ENCODE measurements at regions of chr14 and their contacts with region 1.

Region 1: DNA sequence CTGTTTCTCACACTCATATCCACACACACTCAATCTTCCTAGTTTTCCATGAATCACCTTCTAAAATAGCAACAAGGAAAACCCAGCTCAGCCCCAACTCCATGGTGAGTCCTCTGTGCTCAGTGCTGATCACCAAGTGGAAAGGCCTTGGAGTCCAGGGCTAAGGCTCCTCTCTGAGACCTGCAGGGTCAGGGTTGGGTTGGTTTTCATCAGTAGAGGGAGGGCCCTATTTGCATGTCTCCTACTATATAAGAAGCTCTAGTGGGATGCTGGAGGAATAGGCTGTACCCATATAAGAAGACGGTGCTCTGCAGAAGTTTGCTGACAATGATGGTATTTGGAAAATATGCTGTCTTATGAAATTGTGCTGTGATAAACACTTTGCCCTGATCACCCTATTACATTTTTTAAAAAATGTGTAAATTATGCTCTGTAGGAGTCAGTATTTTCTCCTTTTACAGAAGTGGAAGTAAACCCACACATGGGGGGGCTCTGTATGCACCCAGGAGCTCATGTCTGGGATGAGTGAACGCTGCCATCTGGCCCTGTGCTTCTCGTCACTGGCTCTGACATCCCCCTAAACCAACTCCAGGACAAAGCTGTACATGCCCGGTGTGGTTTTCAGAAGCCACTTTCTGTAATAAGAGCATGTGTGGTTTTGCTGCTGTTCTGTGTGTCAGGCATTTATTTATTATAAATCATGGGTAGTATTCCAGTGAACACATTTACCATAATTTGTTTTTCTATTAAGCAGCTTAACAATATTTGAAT is 536.3 kb downstream of the TMEM121 start:
- DNase-seq: no peak
- ATAC-seq: no peak
- H3K4me3 ChIP-seq: no peak overlapping the region
- H3K4me3 Mint-ChIP-seq: peak overlapping the region in 3 of 10 donors; percentile 21 to 69 (median 52)
- H3K27ac ChIP-seq: no peak overlapping the region
- H3K27ac Mint-ChIP-seq: peak overlapping the region in 3 of 9 donors; percentile 23 to 63 (median 26)
- H3K4me1 ChIP-seq: peaks cover 0 to 10% of the 10 kb centered on the region in 2 donors
- H3K4me1 Mint-ChIP-seq: peaks cover 0 to 25% (median 17%) of the 10 kb centered on the region in 7 donors
- H3K27me3 ChIP-seq: no peaks in the 10 kb centered on the region
- H3K27me3 Mint-ChIP-seq: peaks cover 9 to 45% (median 11%) of the 10 kb centered on the region in 5 donors

Region 2: GRCh38 chr14:105682940-105683570 is 379.6 kb before region 1 on chr14:
- CTCF ChIA-PET with region 1: no interaction called
- POLR2A ChIA-PET with region 1: no interaction called
- intact Hi-C with region 1: loop called in 1 of 2 experiments (anchors 5 kb)
- DNase-seq: no peak
- ATAC-seq: no peak
- H3K4me3 ChIP-seq: no peak overlapping the region
- H3K4me3 Mint-ChIP-seq: peak overlapping the region in 1 of 10 donors; percentile 34
- H3K27ac ChIP-seq: no peak overlapping the region
- H3K27ac Mint-ChIP-seq: peak overlapping the region in 3 of 9 donors; percentile 22 to 79 (median 63)
- H3K4me1 ChIP-seq: no peaks in the 10 kb centered on the region
- H3K4me1 Mint-ChIP-seq: peaks cover 0 to 7% (median 0%) of the 10 kb centered on the region in 7 donors
- H3K27me3 ChIP-seq: no peaks in the 10 kb centered on the region
- H3K27me3 Mint-ChIP-seq: peaks cover 0 to 3% (median 0%) of the 10 kb centered on the region in 5 donors

Region 3: GRCh38 chr14:105974902-105975301 is 87.8 kb before region 1 on chr14:
- CTCF ChIA-PET with region 1: interaction called, 4 read pairs
- POLR2A ChIA-PET with region 1: no interaction called
- intact Hi-C with region 1: loop called in 1 of 2 experiments (anchors 5 kb)
- DNase-seq: peak in 8 of 9 donors; percentile 31 to 59 (median 46)
- ATAC-seq: peak; percentile 73
- H3K4me3 ChIP-seq: no peak overlapping the region
- H3K4me3 Mint-ChIP-seq: peak overlapping the region in 1 of 10 donors; percentile 21
- H3K27ac ChIP-seq: no peak overlapping the region
- H3K27ac Mint-ChIP-seq: peak overlapping the region in 4 of 9 donors; percentile 12 to 76 (median 44)
- H3K4me1 ChIP-seq: peaks cover 10 to 11% of the 10 kb centered on the region in 2 donors
- H3K4me1 Mint-ChIP-seq: peaks cover 0 to 11% (median 8%) of the 10 kb centered on the region in 7 donors
- H3K27me3 ChIP-seq: peaks cover 0 to 10% of the 10 kb centered on the region in 2 donors
- H3K27me3 Mint-ChIP-seq: peaks cover 0 to 8% (median 0%) of the 10 kb centered on the region in 5 donors

Region 4: DNA sequence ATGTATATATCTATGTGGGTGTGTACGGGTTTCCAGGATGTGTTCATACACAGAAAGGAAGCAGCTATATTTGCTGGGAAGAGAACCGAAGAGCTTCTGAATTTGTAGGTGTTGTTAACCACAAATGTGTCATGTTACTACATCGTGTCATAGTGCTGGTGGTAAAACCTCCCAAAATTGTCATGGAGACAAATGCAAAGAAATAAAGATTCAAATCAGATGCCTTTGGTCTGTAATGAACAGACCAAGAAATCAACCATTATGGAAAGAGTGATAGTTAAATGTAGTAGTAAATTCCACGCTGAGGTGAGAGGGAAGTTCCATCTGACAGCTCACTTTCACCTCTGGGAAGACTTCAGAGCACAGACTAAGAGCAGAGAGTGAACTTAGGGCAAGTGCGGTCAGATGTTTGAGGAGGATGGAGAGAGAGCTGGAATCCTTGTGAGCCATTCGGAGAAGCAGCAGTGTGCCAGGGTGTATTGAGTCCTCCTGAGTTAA is 48.8 kb before region 1 on chr14:
- CTCF ChIA-PET with region 1: interaction called, 4 read pairs
- POLR2A ChIA-PET with region 1: no interaction called
- intact Hi-C with region 1: loop called in 1 of 2 experiments (anchors 1 kb)
- DNase-seq: peak in 4 of 9 donors; percentile 40 to 60 (median 54)
- ATAC-seq: peak; percentile 88
- H3K4me3 ChIP-seq: no peak overlapping the region
- H3K4me3 Mint-ChIP-seq: peak overlapping the region in 3 of 10 donors; percentile 16 to 65 (median 20)
- H3K27ac ChIP-seq: peak overlapping the region; percentile 48
- H3K27ac Mint-ChIP-seq: peak overlapping the region; percentile 64 to 93 (median 84)
- H3K4me1 ChIP-seq: peaks cover 0 to 7% of the 10 kb centered on the region in 2 donors
- H3K4me1 Mint-ChIP-seq: peaks cover 14 to 53% (median 20%) of the 10 kb centered on the region in 7 donors
- H3K27me3 ChIP-seq: no peaks in the 10 kb centered on the region
- H3K27me3 Mint-ChIP-seq: peaks cover 0 to 2% (median 0%) of the 10 kb centered on the region in 5 donors

Region 5: DNA sequence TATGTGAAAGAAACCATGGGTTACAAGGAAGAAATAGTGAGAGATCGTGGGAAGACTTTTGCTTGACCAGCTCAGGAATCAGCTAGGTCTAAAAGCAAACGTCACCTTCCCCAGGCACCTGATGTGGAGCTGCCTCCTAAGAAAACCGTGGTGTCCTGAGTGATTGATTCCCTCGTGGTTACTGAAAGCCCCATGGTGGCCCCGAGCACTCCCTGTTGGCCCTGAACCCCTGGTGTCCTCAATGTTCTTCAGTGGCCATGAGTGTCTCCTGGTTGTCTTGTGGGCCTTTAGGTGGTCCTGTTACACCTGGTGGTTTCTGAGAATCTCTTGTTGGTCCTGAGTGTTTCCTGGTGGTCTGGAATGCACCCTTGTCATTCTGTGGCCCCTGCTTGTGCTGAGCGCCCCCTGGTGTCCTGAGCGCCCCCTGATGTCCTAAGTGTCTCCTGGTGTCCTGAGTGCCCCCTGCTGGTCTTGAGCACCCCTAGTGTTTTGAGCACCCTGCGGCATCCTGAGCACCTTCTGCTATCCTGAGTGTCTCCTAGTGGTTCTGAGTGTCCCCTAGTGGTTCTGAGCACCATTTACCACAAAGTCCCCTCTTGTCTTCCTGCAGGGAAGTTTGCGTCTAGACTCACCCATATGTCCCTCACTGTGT is 17.6 kb before region 1 on chr14:
- CTCF ChIA-PET with region 1: interaction called, 3 read pairs
- POLR2A ChIA-PET with region 1: no interaction called
- intact Hi-C with region 1: loop called (anchors 1 to 2 kb)
- DNase-seq: peak; percentile 56 to 78 (median 74)
- ATAC-seq: peak; percentile 98
- H3K4me3 ChIP-seq: no peak overlapping the region
- H3K4me3 Mint-ChIP-seq: no peak overlapping the region
- H3K27ac ChIP-seq: no peak overlapping the region
- H3K27ac Mint-ChIP-seq: peak overlapping the region in 1 of 9 donors; percentile 76
- H3K4me1 ChIP-seq: no peaks in the 10 kb centered on the region
- H3K4me1 Mint-ChIP-seq: peaks cover 0 to 6% (median 0%) of the 10 kb centered on the region in 7 donors
- H3K27me3 ChIP-seq: no peaks in the 10 kb centered on the region
- H3K27me3 Mint-ChIP-seq: peaks cover 0 to 8% (median 0%) of the 10 kb centered on the region in 5 donors

Region 6: DNA sequence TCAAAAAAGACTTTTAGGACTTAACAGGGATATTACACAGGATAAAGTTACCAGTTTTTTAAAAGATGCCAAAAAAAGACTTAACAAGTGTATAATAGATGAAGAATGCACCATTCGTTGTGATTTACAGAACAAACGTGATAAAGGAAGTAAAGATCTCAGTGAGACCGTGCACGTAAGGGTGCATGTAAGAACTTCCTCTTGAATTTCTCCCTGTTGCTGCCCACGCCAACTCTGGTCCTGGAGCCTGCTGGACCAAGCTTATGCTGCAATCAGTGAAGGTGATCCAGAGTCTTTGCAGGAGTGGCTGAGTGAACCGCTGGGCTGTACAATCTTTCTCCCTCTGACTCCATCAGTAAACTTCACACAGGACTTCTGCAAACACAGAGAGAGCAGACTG is 57.4 kb after region 1 on chr14:
- CTCF ChIA-PET with region 1: no interaction called
- POLR2A ChIA-PET with region 1: no interaction called
- intact Hi-C with region 1: loop called in 1 of 2 experiments (anchors 1 kb)
- DNase-seq: no peak
- ATAC-seq: no peak
- H3K4me3 ChIP-seq: no peak overlapping the region
- H3K4me3 Mint-ChIP-seq: peak overlapping the region in 9 of 10 donors; percentile 43 to 79 (median 71)
- H3K27ac ChIP-seq: peak overlapping the region; percentile 29
- H3K27ac Mint-ChIP-seq: peak overlapping the region in 7 of 9 donors; percentile 68 to 94 (median 76)
- H3K4me1 ChIP-seq: peaks cover 3 to 25% of the 10 kb centered on the region in 2 donors
- H3K4me1 Mint-ChIP-seq: peaks cover 12 to 53% (median 45%) of the 10 kb centered on the region in 7 donors
- H3K27me3 ChIP-seq: no peaks in the 10 kb centered on the region
- H3K27me3 Mint-ChIP-seq: peaks cover 0 to 70% (median 9%) of the 10 kb centered on the region in 5 donors

Region 7: GRCh38 chr14:106185837-106186233 is 123.1 kb after region 1 on chr14:
- CTCF ChIA-PET with region 1: no interaction called
- POLR2A ChIA-PET with region 1: no interaction called
- intact Hi-C with region 1: loop called in 1 of 2 experiments (anchors 2 kb)
- DNase-seq: peak; percentile 55 to 80 (median 74)
- ATAC-seq: peak; percentile 89
- H3K4me3 ChIP-seq: no peak overlapping the region
- H3K4me3 Mint-ChIP-seq: peak overlapping the region; percentile 54 to 81 (median 72)
- H3K27ac ChIP-seq: peak overlapping the region; percentile 46
- H3K27ac Mint-ChIP-seq: peak overlapping the region; percentile 59 to 96 (median 89)
- H3K4me1 ChIP-seq: peaks cover 21 to 27% of the 10 kb centered on the region in 2 donors
- H3K4me1 Mint-ChIP-seq: peaks cover 24 to 51% (median 45%) of the 10 kb centered on the region in 7 donors
- H3K27me3 ChIP-seq: no peaks in the 10 kb centered on the region
- H3K27me3 Mint-ChIP-seq: peaks cover 0 to 64% (median 0%) of the 10 kb centered on the region in 5 donors